Activated CD8-positive, alpha-beta T cell treated with anti-CD3 and anti-CD28 coated beads, Interleukin-2, amount 10 ng/mL, durations not matched to agents 7 days and 5 days (primary cell): ENCODE measurements at regions of chr9 and their contacts with region 1.

Region 1: GRCh38 chr9:136849038-136849959 is at the start of gene PHPT1:
- DNase-seq: peak; percentile 98
- ATAC-seq: peak; percentile 93
- H3K4me3 Mint-ChIP-seq: peak within 1 kb of the TSS; percentile 92
- H3K27ac Mint-ChIP-seq: peak within 1 kb of the TSS; percentile 91
- H3K4me1 Mint-ChIP-seq: peaks cover 21% of the 10 kb centered on the region
- H3K27me3 Mint-ChIP-seq: peaks cover 13% of the 10 kb centered on the region
- total RNA-seq, gene PHPT1: 108 to 119 TPM

Region 2: GRCh38 chr9:136605988-136606660 is 243.2 kb before region 1 on chr9:
- CTCF ChIA-PET with region 1: no interaction called
- POLR2A ChIA-PET with region 1: no interaction called
- DNase-seq: no peak
- ATAC-seq: no peak
- H3K4me3 Mint-ChIP-seq: no peak overlapping the region
- H3K27ac Mint-ChIP-seq: no peak overlapping the region
- H3K4me1 Mint-ChIP-seq: no peaks in the 10 kb centered on the region
- H3K27me3 Mint-ChIP-seq: peaks cover 3% of the 10 kb centered on the region

Region 3: DNA sequence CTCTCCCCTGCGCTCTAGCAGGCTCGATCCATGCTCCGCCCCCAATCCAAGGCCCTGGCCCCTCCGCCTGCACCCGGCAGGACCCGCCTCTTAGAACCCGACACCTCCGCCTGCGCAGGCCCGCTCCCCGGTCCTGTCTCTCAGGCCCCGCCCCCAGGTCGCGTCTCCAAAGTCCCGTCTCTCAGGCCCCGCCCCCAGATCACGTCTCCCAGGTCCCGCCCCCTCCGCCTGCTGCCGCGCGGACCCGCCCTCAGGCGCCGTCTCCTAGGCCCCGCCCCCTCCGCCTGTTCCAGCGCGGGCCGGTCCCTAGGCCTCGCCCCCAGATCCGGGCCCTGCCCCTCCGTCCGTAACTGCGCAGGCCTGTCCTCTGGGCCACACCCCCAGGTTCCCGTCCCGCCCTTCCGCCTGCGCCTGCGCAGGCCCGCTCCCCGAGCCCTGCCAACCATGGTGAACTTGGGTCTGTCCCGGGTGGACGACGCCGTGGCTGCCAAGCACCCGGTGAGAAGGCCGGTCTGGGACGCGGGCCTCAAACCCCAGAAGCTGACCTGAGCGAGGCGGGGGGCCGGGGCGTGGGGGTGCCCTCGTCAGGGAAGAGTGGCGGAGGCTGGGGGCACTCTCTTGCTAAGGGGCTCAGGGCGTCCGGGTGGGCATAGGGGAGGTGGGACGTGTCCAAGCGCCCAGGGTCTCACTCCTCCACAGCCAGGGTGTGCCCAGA is 58.2 kb before region 1 on chr9 and contains the start of gene TMEM141:
- CTCF ChIA-PET with region 1: no interaction called
- POLR2A ChIA-PET with region 1: no interaction called
- DNase-seq: peak; percentile 100
- ATAC-seq: peak; percentile 93
- H3K4me3 Mint-ChIP-seq: peak within 1 kb of the TSS; percentile 82
- H3K27ac Mint-ChIP-seq: peak within 1 kb of the TSS; percentile 93
- H3K4me1 Mint-ChIP-seq: peaks cover 47% of the 10 kb centered on the region
- H3K27me3 Mint-ChIP-seq: peaks cover 4% of the 10 kb centered on the region
- total RNA-seq, gene TMEM141: 39.9 to 43.2 TPM

Region 4: GRCh38 chr9:136814725-136815421 is 34.4 kb before region 1 on chr9:
- CTCF ChIA-PET with region 1: interaction called, 10 read pairs
- POLR2A ChIA-PET with region 1: no interaction called
- DNase-seq: no peak
- ATAC-seq: no peak
- H3K4me3 Mint-ChIP-seq: no peak overlapping the region
- H3K27ac Mint-ChIP-seq: no peak overlapping the region
- H3K4me1 Mint-ChIP-seq: peaks cover 43% of the 10 kb centered on the region
- H3K27me3 Mint-ChIP-seq: no peaks in the 10 kb centered on the region

Region 5: DNA sequence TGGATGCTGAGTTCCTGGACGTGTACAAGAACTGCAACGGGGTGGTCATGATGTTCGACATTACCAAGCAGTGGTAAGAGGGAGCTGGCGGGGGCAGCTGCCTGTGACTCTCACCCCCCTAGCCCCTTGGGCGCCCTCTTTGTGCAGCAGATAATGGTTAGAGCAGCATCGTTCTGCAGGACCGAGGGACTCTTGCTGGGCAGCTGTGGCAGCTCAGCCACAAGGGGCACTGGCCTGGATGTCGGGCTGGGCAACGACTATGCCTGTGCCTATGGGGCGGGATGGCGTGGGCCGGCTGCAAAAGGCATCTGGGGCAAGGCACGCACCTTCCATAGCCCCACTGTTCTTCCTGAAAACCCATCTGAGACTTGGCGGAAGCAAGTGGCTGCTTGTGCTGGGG is 19.9 kb before region 1 on chr9:
- CTCF ChIA-PET with region 1: no interaction called
- POLR2A ChIA-PET with region 1: no interaction called
- DNase-seq: no peak
- ATAC-seq: no peak
- H3K4me3 Mint-ChIP-seq: no peak overlapping the region
- H3K27ac Mint-ChIP-seq: no peak overlapping the region
- H3K4me1 Mint-ChIP-seq: no peaks in the 10 kb centered on the region
- H3K27me3 Mint-ChIP-seq: no peaks in the 10 kb centered on the region

Region 6: GRCh38 chr9:136885950-136886578 is 36.8 kb after region 1 on chr9 and contains the start of gene TRAF2:
- CTCF ChIA-PET with region 1: interaction called, 21 read pairs
- POLR2A ChIA-PET with region 1: interaction called, 4 read pairs
- DNase-seq: peak; percentile 98
- ATAC-seq: peak; percentile 93
- H3K4me3 Mint-ChIP-seq: peak within 1 kb of the TSS; percentile 98
- H3K27ac Mint-ChIP-seq: peak within 1 kb of the TSS; percentile 89
- H3K4me1 Mint-ChIP-seq: peaks cover 51% of the 10 kb centered on the region
- H3K27me3 Mint-ChIP-seq: no peaks in the 10 kb centered on the region
- total RNA-seq, gene TRAF2: 48.5 to 57.2 TPM